Heart right ventricle (tissue), 16 donors: ENCODE measurements at regions of chr20 and their contacts with region 1.

Region 1: GRCh38 chr20:17504898-17505635 is 26.1 kb downstream of the BFSP1 start:
- DNase-seq: peak; percentile 29 to 59
- ATAC-seq: peak; percentile 78 to 91 (median 85)
- H3K4me3 ChIP-seq: peak overlapping the region in 9 of 10 donors; percentile 27 to 60 (median 57)
- H3K27ac ChIP-seq: peak overlapping the region in 7 of 10 donors; percentile 1 to 58 (median 31)
- H3K4me1 ChIP-seq: peaks cover 0 to 19% (median 8%) of the 10 kb centered on the region in 9 donors
- H3K27me3 ChIP-seq: no peaks in the 10 kb centered on the region
- CTCF ChIP-seq: peak; percentile 60 to 82 (median 73)

Region 2: DNA sequence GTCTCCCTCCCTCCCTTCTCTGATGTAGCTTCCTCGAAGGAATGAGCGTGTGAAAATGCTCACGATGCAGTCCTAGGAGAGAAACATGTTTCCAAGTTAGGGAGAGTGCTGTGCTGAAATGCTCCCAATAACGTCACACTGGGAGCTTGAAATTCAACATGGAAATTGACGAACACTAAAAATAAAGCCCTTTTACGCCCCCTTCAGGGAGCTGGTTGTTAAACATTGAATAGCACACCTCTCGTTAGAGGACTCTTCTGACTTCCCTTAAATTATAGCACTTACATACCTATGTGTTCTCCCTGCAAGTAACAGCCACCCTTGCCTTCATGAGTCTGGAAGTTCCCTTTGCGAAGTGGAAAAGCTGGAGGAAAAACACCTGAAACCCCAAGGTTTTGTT is 62.5 kb before region 1 on chr20:
- intact Hi-C with region 1: no loop called
- DNase-seq: no peak
- ATAC-seq: no peak
- H3K4me3 ChIP-seq: no peak overlapping the region
- H3K27ac ChIP-seq: no peak overlapping the region
- H3K4me1 ChIP-seq: no peaks in the 10 kb centered on the region
- H3K27me3 ChIP-seq: peaks cover 0 to 50% (median 29%) of the 10 kb centered on the region in 7 donors
- CTCF ChIP-seq: no peak

Region 3: DNA sequence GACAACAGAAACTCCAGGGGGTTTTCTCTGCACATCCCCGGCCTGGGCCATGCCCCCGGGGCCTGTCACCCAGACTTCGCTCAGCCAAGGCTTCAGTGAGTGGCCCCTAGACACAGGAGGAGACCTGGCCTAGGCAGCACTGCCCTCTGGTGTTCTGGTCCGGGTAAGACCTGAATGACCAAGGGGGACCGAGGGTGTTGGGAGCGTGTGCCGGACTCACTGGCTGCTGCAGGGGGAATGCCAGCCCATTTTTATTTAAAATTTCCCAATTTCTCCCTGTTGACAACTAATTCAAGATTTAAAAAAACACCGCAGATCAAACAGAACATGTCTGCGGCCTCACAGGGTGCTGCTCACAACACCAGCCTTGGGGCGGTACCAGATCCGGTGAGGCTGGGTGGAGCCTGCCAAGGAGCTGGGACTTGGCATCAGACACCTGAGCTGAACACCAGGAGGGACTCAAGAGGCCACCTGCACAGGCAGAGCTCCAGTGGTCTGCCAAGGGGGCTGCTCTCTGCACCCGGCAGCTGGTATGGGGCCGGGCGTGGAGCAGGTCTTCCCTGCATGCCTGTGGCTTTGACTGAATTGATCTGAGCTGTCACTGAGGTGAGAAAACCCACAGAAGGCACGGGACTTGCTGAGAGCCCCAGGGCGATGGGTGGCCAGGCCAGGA is 112.6 kb after region 1 on chr20:
- intact Hi-C with region 1: loop called in 4 of 10 experiments (anchors 1 to 10 kb)
- DNase-seq: peak in 1 of 2 donors; percentile 65
- ATAC-seq: peak; percentile 38 to 63 (median 50)
- H3K4me3 ChIP-seq: no peak overlapping the region
- H3K27ac ChIP-seq: no peak overlapping the region
- H3K4me1 ChIP-seq: peaks cover 17 to 49% (median 27%) of the 10 kb centered on the region in 9 donors
- H3K27me3 ChIP-seq: no peaks in the 10 kb centered on the region
- CTCF ChIP-seq: peak; percentile 55 to 83 (median 74)

Region 4: GRCh38 chr20:17904027-17904426 is 399.0 kb after region 1 on chr20:
- intact Hi-C with region 1: loop called in 5 of 10 experiments (anchors 2 to 10 kb)
- DNase-seq: no peak
- ATAC-seq: no peak
- H3K4me3 ChIP-seq: no peak overlapping the region
- H3K27ac ChIP-seq: no peak overlapping the region
- H3K4me1 ChIP-seq: no peaks in the 10 kb centered on the region
- H3K27me3 ChIP-seq: no peaks in the 10 kb centered on the region
- CTCF ChIP-seq: no peak

Region 5: GRCh38 chr20:17938871-17939619 is 434.0 kb after region 1 on chr20:
- intact Hi-C with region 1: loop called in 1 of 10 experiments (anchors 10 kb)
- DNase-seq: peak; percentile 55 to 57
- ATAC-seq: peak; percentile 63 to 87 (median 76)
- H3K4me3 ChIP-seq: no peak overlapping the region
- H3K27ac ChIP-seq: peak overlapping the region in 2 of 10 donors; percentile 29 to 54
- H3K4me1 ChIP-seq: peaks cover 3 to 54% (median 33%) of the 10 kb centered on the region in 9 donors
- H3K27me3 ChIP-seq: no peaks in the 10 kb centered on the region
- CTCF ChIP-seq: peak; percentile 81 to 94 (median 89)

Region 6: GRCh38 chr20:17995967-17996819 is 491.1 kb after region 1 on chr20:
- intact Hi-C with region 1: loop called (anchors 2 to 10 kb)
- DNase-seq: peak in 1 of 2 donors; percentile 46
- ATAC-seq: peak in 6 of 8 donors; percentile 62 to 79 (median 70)
- H3K4me3 ChIP-seq: peak overlapping the region in 1 of 10 donors; percentile 15
- H3K27ac ChIP-seq: no peak overlapping the region
- H3K4me1 ChIP-seq: peaks cover 0 to 11% (median 0%) of the 10 kb centered on the region in 9 donors
- H3K27me3 ChIP-seq: no peaks in the 10 kb centered on the region
- CTCF ChIP-seq: peak; percentile 89 to 98 (median 96)

Region 7: GRCh38 chr20:18276821-18277220 is 771.8 kb after region 1 on chr20:
- intact Hi-C with region 1: loop called in 7 of 10 experiments (anchors 5 to 10 kb)
- DNase-seq: peak; percentile 34 to 46
- ATAC-seq: peak in 5 of 8 donors; percentile 61 to 80 (median 72)
- H3K4me3 ChIP-seq: no peak overlapping the region
- H3K27ac ChIP-seq: no peak overlapping the region
- H3K4me1 ChIP-seq: peaks cover 0 to 9% (median 0%) of the 10 kb centered on the region in 9 donors
- H3K27me3 ChIP-seq: peaks cover 0 to 65% (median 35%) of the 10 kb centered on the region in 7 donors
- CTCF ChIP-seq: peak; percentile 12 to 81 (median 68)

Region 8: DNA sequence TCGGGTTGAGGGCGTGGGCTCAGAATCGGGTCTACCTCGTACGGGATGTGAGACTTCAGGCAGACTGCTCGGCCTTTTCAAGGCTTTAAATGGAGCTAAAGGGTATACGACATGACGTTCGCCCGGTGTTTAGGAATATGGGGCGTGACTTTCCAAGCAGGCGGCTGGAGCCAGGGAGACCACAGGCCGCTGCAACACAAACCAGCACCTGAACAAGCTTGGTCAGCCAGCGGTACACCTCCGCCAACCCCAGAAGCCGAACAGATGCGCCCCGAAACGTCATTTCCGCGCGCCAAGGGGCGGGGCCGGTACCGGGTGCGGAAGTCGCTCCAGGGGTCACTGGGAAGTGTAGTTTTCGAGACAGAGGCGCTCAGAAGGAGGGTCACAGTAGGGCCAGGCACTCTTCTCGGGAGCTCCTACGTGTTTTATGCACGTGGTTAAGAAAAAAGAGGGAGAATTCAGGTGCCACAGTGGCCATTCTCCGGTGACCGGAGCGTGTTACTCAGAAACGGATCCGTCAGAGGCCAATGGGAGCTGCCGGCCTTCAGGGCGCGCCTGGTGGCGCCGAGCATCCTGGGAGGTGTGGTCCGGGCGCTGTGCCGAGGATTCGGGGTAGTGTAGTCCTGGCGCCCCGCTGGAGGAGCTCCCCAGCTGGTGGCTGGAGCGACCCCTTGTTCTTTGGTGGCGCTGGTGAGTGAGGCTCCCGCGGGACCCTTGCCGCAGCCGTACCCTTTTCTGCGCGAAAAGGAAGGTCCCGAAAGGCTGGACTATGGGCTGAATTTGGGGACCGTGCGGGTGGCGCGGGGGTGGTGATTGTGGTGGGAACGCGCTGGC is 783.1 kb after region 1 on chr20 and contains the start of gene ZNF133:
- intact Hi-C with region 1: loop called in 3 of 10 experiments (anchors 10 kb)
- DNase-seq: peak; percentile 96 to 98
- ATAC-seq: peak; percentile 98 to 100 (median 99)
- H3K4me3 ChIP-seq: peak within 1 kb of the TSS; percentile 65 to 95 (median 83)
- H3K27ac ChIP-seq: peak within 1 kb of the TSS; percentile 91 to 100 (median 96)
- H3K4me1 ChIP-seq: peaks cover 0 to 19% (median 14%) of the 10 kb centered on the region in 9 donors
- H3K27me3 ChIP-seq: peaks cover 0 to 30% (median 16%) of the 10 kb centered on the region in 7 donors
- CTCF ChIP-seq: peak in 2 of 9 donors; percentile 12 to 22
- total RNA-seq, gene ZNF133: 4.9 to 7.2 (median 5.6) TPM